ENCODE measurements at regions of chrX and their contacts with region 1.

Region 1: DNA sequence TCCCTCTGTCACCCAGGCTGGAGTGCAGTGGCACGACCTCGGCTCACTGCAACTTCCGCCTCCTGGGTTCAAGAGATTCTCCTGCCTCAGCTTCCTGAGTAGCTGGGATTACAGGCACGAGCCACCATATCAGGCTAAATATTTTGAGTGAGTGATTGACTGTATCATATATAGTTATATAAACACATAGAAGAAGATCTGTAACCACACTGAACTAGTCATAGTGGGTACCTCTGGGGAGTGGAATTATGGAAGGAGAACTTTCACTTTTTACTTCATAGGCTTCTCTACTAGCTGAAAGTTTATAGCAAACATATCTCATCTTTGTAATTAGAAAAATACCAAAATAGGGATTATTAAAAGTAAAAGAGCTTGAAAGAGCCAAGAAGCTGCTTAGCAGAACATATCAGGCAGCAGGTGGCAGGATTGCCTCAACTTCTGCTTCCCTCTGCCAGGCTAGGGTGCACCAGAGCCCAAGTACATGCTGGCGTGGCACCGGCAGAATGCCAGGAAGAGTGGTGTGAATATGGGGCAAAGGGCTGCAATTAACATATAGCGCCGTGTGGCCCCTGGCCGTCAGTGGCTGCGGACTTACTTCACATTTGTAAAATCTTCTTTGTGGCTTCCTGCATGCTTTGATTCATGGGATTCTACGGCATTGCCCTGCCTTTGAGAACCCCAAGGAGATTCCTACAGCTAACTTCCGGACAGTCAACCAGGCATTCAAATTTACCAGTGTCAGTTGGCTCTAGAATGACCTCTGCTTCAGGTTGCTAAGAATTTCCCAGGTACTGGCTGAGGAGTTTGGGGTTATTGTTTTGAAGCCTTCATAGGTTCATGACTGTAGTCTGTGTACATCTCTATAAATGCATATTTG is 39.4 kb upstream of the CD40LG start:
- DNase-seq: peak; percentile 55 to 78 (median 70)
- H3K4me3 ChIP-seq: no peak overlapping the region
- H3K27ac ChIP-seq: no peak overlapping the region
- H3K4me1 ChIP-seq: no peaks in the 10 kb centered on the region
- H3K27me3 ChIP-seq: no peaks in the 10 kb centered on the region

Region 2: DNA sequence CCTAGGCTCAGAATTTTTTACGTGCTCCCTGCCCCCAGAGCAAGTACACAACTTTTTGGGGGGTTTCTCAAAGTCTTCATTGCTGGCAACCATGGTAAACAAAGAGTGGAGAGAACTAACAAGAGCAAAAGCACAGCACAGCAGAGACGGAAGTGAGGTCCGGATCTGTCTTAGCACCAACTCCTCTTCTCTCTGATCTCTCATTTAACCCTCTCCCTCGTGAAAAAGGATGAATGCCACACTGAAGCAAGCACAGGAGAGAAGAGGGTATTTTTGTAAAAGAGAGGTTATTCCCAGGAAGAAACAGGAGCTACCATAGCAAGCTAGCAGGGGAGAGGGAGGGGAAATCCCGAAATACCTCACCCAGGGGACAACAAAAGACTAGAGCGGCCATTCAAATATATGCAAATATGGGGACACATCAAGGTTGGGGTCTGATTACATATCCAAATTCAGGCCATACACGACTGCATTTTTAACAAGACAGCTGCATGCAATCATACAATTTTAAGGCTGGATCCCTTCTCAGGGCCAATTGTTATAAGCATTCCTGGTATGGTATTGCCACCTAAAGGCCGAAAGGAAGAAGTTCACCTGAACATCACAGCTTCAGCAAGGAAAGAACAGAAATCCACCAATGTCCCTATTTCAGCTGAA is 86.0 kb after region 1 on chrX:
- CTCF ChIA-PET with region 1: interaction called, 48 read pairs
- POLR2A ChIA-PET with region 1: interaction called, 3 read pairs
- DNase-seq: peak in 2 of 3 donors; percentile 66 to 69
- H3K4me3 ChIP-seq: no peak overlapping the region
- H3K27ac ChIP-seq: no peak overlapping the region
- H3K4me1 ChIP-seq: peaks cover 0 to 3% (median 0%) of the 10 kb centered on the region in 4 experiments
- H3K27me3 ChIP-seq: peaks cover 0 to 3% (median 0%) of the 10 kb centered on the region in 5 experiments

Measured in common myeloid progenitor, CD34-positive (primary cell).